ENCODE measurements at regions of chr1 and their contacts with region 1.

Region 1: GRCh38 chr1:11301601-11302000 is 28.6 kb downstream of the UBIAD1 start:
- DNase-seq: no peak
- H3K4me3 ChIP-seq: no peak overlapping the region
- H3K27ac ChIP-seq: no peak overlapping the region
- H3K4me1 ChIP-seq: no peaks in the 10 kb centered on the region
- H3K27me3 ChIP-seq: no peaks in the 10 kb centered on the region
- CTCF ChIP-seq: no peak
- EP300 ChIP-seq: no peak
- POLR2A ChIP-seq: no peak

Region 2: GRCh38 chr1:11331036-11331944 is 29.7 kb after region 1 on chr1:
- in situ Hi-C with region 1: no loop called
- intact Hi-C with region 1: loop called (anchors 1 kb)
- DNase-seq: no peak
- H3K4me3 ChIP-seq: no peak overlapping the region
- H3K27ac ChIP-seq: no peak overlapping the region
- H3K4me1 ChIP-seq: no peaks in the 10 kb centered on the region
- H3K27me3 ChIP-seq: peaks cover 7% of the 10 kb centered on the region
- CTCF ChIP-seq: no peak
- EP300 ChIP-seq: no peak
- POLR2A ChIP-seq: no peak

Region 3: DNA sequence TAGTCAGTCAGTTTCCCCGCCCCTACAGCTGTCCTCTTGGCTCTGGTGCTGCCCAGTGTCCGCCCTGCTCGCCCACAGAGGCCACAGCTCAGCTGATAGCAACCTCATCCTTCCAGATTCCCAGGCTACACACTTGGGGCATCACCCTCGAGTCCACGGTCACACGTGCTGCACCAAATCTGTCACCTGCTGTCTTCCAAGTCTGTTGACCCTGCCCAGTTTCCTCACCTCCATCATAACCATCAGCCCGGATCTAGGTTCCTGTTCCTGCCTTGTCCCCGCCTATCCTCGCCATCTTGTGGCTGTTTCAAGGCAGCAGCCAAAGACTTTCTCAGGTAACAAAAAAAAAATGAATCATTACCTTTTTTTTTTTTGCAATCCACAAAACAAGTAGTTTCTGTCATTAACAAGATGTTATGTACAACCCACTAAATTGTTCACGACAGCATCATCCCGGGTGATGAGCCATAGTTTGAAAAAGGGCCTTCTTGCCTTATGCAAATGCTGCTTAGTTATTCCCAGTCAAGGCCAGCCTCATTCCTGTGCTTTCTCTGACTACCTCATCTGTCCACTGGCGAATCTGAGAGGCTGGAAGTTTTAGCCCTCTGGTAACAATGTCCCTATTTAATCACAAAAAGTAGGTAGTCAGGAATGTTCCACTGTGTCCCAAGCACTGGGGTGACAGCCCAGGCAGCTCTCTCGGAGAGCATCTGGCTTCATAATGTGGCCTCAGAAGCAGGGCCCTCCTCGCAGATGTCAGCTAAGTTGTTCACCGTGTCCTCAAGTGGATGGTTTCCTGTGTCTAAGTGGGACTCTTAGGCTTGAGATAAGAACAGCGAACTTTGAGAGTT is 712.8 kb after region 1 on chr1:
- in situ Hi-C with region 1: no loop called
- intact Hi-C with region 1: no loop called
- DNase-seq: no peak
- H3K4me3 ChIP-seq: no peak overlapping the region
- H3K27ac ChIP-seq: no peak overlapping the region
- H3K4me1 ChIP-seq: peaks cover 0 to 2% (median 0%) of the 10 kb centered on the region in 4 donors
- H3K27me3 ChIP-seq: no peaks in the 10 kb centered on the region
- CTCF ChIP-seq: no peak
- EP300 ChIP-seq: no peak
- POLR2A ChIP-seq: no peak